ENCODE measurements at regions of chr9 and their contacts with region 1.

Region 1: DNA sequence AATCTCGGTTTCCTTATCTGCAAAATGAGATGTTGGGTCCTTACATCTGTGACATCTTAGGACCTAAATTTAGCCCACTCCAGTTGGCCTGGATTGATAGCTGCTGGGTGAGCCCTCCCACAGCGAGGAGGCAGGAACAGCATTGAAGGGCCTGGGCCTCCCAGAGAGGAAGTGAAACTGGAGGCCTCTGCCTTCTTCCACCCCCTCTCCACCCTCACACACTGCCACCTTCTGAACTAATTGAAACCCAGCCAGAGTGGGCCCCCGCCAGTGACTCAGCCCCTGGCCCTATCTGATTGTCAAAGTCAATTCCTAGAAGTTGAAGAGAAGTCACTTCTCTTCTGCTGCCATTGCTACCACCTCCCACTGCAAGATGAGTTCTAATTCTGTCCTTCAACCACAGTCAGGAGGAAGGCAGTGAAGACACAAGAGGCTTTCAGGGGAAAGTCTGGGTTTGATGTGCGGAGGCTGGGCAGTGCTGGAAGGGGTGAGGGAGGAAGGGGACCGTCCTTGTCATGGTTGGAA is 55.2 kb upstream of the NEK6 start:
- DNase-seq: peak; percentile 96
- H3K4me3 Mint-ChIP-seq: peak overlapping the region; percentile 31
- H3K27ac Mint-ChIP-seq: peak overlapping the region; percentile 87
- H3K4me1 Mint-ChIP-seq: peaks cover 47% of the 10 kb centered on the region
- H3K27me3 Mint-ChIP-seq: peaks cover 4% of the 10 kb centered on the region

Region 2: GRCh38 chr9:124146031-124146561 is 56.4 kb before region 1 on chr9:
- CTCF ChIA-PET with region 1: no interaction called
- POLR2A ChIA-PET with region 1: no interaction called
- intact Hi-C with region 1: loop called (anchors 1 kb)
- DNase-seq: peak; percentile 41
- H3K4me3 Mint-ChIP-seq: no peak overlapping the region
- H3K27ac Mint-ChIP-seq: peak overlapping the region; percentile 20
- H3K4me1 Mint-ChIP-seq: peaks cover 13% of the 10 kb centered on the region
- H3K27me3 Mint-ChIP-seq: no peaks in the 10 kb centered on the region

Region 3: DNA sequence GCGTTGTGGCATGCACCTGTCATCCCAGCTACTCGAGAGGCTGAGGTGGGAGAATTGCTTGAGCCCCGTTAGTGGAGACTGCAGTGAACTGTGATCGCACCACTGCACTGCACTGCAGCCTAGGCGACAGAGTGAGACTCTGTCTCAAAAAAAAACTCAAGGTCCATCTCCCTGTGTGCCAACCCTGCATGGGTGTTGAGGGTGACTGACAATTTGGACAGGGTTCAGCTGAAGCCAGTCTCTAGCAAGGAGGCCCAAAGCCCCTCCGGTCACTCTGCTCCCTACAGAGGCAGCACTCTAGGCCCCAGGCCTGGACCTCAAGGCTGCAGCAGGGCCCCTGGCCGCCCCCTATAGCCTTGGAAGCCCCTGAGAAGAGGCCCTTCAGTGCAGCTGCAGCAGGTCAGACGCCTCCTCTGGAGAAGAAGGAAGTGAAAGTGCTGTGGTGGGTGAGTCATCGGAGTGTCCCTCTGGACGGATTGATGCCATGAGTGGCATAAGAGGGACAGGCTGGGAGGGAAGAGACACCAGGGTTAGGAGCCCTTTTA is 16.0 kb after region 1 on chr9:
- CTCF ChIA-PET with region 1: interaction called, 6 read pairs
- POLR2A ChIA-PET with region 1: interaction called, 15 read pairs
- intact Hi-C with region 1: loop called (anchors 1 kb)
- DNase-seq: peak; percentile 76
- H3K4me3 Mint-ChIP-seq: no peak overlapping the region
- H3K27ac Mint-ChIP-seq: peak overlapping the region; percentile 25
- H3K4me1 Mint-ChIP-seq: peaks cover 56% of the 10 kb centered on the region
- H3K27me3 Mint-ChIP-seq: no peaks in the 10 kb centered on the region

Region 4: GRCh38 chr9:124285903-124286291 is 83.4 kb after region 1 on chr9:
- CTCF ChIA-PET with region 1: no interaction called
- POLR2A ChIA-PET with region 1: no interaction called
- intact Hi-C with region 1: loop called (anchors 1 kb)
- DNase-seq: peak; percentile 79
- H3K4me3 Mint-ChIP-seq: peak overlapping the region; percentile 70
- H3K27ac Mint-ChIP-seq: peak overlapping the region; percentile 99
- H3K4me1 Mint-ChIP-seq: peaks cover 34% of the 10 kb centered on the region
- H3K27me3 Mint-ChIP-seq: no peaks in the 10 kb centered on the region